ENCODE measurements at regions of chr16 and their contacts with region 1.

Region 1: GRCh38 chr16:25051406-25052150 is 36.4 kb upstream of the ARHGAP17 start:
- DNase-seq: peak in 1 of 9 experiments; percentile 15
- ATAC-seq: no peak
- H3K4me3 ChIP-seq: no peak overlapping the region
- H3K4me3 Mint-ChIP-seq: peak overlapping the region; percentile 36
- H3K27ac ChIP-seq: peak overlapping the region in 1 of 2 experiments; percentile 88
- H3K27ac Mint-ChIP-seq: peak overlapping the region; percentile 79
- H3K4me1 ChIP-seq: peaks cover 44% of the 10 kb centered on the region
- H3K4me1 Mint-ChIP-seq: peaks cover 50% of the 10 kb centered on the region
- H3K27me3 ChIP-seq: no peaks in the 10 kb centered on the region
- H3K27me3 Mint-ChIP-seq: no peaks in the 10 kb centered on the region
- CTCF ChIP-seq: no peak

Region 2: DNA sequence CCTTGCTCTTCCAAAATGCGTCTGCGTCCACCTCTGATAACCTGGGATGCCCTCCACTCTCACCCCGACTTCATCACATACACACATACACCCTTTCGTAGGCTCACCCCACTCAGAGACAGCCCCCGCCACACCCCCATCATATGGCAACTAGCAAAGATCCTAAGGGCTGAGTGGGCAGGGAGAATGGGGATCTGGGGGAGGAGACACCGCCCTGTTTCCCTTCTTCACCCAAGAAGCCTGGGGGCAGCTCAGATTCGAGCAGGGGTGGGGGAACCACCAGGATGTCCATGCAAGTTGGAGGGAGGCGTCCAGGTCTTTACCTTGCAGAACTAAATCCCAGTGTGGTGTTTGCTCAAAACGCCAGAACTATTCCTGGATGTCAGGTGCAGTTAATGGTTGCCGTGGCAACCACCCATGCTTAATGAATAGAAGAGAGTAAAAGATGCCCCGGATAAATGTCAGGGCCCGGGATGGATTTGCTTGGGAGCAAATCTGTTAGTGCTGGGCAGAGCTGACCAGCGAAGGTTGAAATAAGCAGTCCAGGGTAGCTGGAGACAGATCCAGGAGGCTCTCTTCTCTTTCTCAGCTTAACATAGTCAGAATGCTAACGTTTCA is 722.6 kb before region 1 on chr16:
- CTCF ChIA-PET with region 1: no interaction called
- POLR2A ChIA-PET with region 1: no interaction called
- intact Hi-C with region 1: no loop called
- DNase-seq: no peak
- ATAC-seq: no peak
- H3K4me3 ChIP-seq: no peak overlapping the region
- H3K4me3 Mint-ChIP-seq: no peak overlapping the region
- H3K27ac ChIP-seq: no peak overlapping the region
- H3K27ac Mint-ChIP-seq: no peak overlapping the region
- H3K4me1 ChIP-seq: no peaks in the 10 kb centered on the region
- H3K4me1 Mint-ChIP-seq: no peaks in the 10 kb centered on the region
- H3K27me3 ChIP-seq: no peaks in the 10 kb centered on the region
- H3K27me3 Mint-ChIP-seq: peaks cover 19% of the 10 kb centered on the region
- CTCF ChIP-seq: no peak

Region 3: GRCh38 chr16:24883714-24884151 is 167.8 kb before region 1 on chr16:
- CTCF ChIA-PET with region 1: no interaction called
- POLR2A ChIA-PET with region 1: no interaction called
- intact Hi-C with region 1: no loop called
- DNase-seq: no peak
- ATAC-seq: no peak
- H3K4me3 ChIP-seq: no peak overlapping the region
- H3K4me3 Mint-ChIP-seq: no peak overlapping the region
- H3K27ac ChIP-seq: no peak overlapping the region
- H3K27ac Mint-ChIP-seq: no peak overlapping the region
- H3K4me1 ChIP-seq: no peaks in the 10 kb centered on the region
- H3K4me1 Mint-ChIP-seq: no peaks in the 10 kb centered on the region
- H3K27me3 ChIP-seq: no peaks in the 10 kb centered on the region
- H3K27me3 Mint-ChIP-seq: peaks cover 5% of the 10 kb centered on the region
- CTCF ChIP-seq: no peak

Region 4: DNA sequence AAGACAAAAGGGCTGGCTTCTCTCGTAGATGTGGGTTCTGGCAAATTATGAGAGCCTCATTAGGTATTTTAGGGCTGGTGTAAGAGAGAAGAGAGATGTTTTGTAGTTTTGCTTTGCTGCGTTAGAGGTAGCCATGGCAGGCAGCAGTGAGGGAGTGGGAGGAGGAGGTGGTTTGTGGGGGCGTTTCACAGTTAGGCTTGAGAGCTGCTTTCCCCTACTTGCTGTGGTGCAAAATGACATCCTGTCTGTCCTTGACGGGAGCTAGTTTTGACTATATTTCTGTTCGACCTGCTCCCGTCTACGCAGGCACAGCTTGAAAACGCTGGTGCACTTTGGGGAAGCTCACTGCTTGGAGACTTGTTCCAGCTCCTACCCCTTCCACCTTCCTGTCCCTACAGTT is 130.3 kb before region 1 on chr16:
- CTCF ChIA-PET with region 1: no interaction called
- POLR2A ChIA-PET with region 1: no interaction called
- intact Hi-C with region 1: no loop called
- DNase-seq: peak in 6 of 9 experiments; percentile 1 to 56 (median 24)
- ATAC-seq: peak; percentile 83
- H3K4me3 ChIP-seq: no peak overlapping the region
- H3K4me3 Mint-ChIP-seq: no peak overlapping the region
- H3K27ac ChIP-seq: peak overlapping the region in 1 of 2 experiments; percentile 60
- H3K27ac Mint-ChIP-seq: peak overlapping the region; percentile 83
- H3K4me1 ChIP-seq: no peaks in the 10 kb centered on the region
- H3K4me1 Mint-ChIP-seq: peaks cover 21% of the 10 kb centered on the region
- H3K27me3 ChIP-seq: no peaks in the 10 kb centered on the region
- H3K27me3 Mint-ChIP-seq: no peaks in the 10 kb centered on the region
- CTCF ChIP-seq: no peak

Region 5: GRCh38 chr16:25031441-25032307 is 19.9 kb before region 1 on chr16:
- CTCF ChIA-PET with region 1: interaction called, 5 read pairs
- POLR2A ChIA-PET with region 1: interaction called, 38 read pairs
- intact Hi-C with region 1: loop called (anchors 1 kb)
- DNase-seq: peak; percentile 79 to 97 (median 90)
- ATAC-seq: peak; percentile 99
- H3K4me3 ChIP-seq: peak overlapping the region; percentile 88 to 94
- H3K4me3 Mint-ChIP-seq: peak overlapping the region; percentile 96
- H3K27ac ChIP-seq: peak overlapping the region; percentile 65 to 68
- H3K27ac Mint-ChIP-seq: peak overlapping the region; percentile 94
- H3K4me1 ChIP-seq: peaks cover 14% of the 10 kb centered on the region
- H3K4me1 Mint-ChIP-seq: peaks cover 39% of the 10 kb centered on the region
- H3K27me3 ChIP-seq: no peaks in the 10 kb centered on the region
- H3K27me3 Mint-ChIP-seq: no peaks in the 10 kb centered on the region
- CTCF ChIP-seq: no peak

Region 6: DNA sequence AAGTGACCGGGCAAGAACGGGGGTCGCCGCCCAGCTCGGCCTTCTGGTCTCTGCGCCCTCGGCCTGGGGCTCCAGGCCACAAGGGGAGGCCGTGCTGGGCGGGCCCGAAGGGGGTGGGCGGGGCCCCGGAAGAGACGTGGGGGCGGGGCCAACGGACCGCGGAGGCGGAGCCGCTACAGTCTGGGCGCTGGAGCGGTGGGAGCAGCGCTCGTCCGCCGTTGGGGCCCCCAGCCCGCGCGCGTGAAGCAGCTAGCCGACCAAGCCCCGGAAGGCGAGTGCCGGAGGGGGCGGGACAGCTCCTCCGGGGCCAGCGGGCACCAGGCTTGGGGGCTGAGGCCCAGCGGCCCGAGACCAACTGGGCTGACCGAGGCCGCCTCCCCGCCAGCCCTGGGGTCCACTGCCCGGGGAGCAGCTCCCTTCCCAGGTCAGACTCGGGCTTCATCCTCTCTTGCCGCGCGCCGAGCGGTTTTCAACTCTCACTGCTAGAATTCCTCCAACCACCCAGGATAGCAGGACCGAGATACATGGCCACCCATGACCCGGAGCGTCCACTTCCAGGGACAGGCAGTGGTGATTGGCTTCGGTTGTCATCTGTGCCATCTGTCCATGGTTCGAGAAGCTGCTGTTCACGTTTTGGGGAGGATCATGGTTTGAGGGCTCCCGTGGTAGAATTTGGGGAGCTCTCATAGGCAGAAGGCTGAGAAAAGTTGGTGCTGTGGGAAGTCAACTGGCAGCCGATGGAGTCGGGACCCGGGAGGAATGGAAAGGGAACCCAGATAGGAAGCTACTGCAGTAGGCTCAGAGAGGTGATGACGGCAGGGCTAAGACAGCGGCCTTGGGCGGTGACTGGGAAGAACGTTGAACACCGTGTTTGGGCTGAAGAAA is 15.4 kb after region 1 on chr16:
- CTCF ChIA-PET with region 1: interaction called, 4 read pairs
- POLR2A ChIA-PET with region 1: interaction called, 25 read pairs
- intact Hi-C with region 1: loop called (anchors 2 kb)
- DNase-seq: peak; percentile 63 to 92 (median 82)
- ATAC-seq: peak; percentile 97
- H3K4me3 ChIP-seq: peak overlapping the region; percentile 65 to 70
- H3K4me3 Mint-ChIP-seq: peak overlapping the region; percentile 95
- H3K27ac ChIP-seq: peak overlapping the region; percentile 61 to 86
- H3K27ac Mint-ChIP-seq: peak overlapping the region; percentile 97
- H3K4me1 ChIP-seq: peaks cover 42% of the 10 kb centered on the region
- H3K4me1 Mint-ChIP-seq: peaks cover 59% of the 10 kb centered on the region
- H3K27me3 ChIP-seq: no peaks in the 10 kb centered on the region
- H3K27me3 Mint-ChIP-seq: no peaks in the 10 kb centered on the region
- CTCF ChIP-seq: no peak

Region 7: DNA sequence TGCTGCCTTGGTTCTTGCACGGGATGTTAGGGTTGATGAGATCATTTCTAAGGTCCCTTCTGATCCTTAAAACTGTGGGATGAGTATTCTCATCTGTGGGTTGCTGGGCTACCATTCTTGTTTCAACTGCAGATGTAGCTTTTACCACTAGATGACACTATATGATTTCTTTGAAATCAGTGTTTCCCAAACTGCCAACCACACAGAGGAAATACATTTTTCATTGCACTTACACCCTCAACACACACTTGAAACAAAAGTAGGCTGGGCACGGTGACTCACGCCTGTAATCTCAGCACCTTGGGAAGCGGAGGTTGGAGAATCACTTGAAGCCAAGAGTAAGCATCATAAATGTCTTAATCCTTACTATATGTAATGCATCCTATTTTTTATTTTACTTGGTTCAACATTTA is 75.2 kb after region 1 on chr16:
- CTCF ChIA-PET with region 1: interaction called, 3 read pairs
- POLR2A ChIA-PET with region 1: no interaction called
- intact Hi-C with region 1: loop called (anchors 1 kb)
- DNase-seq: peak in 3 of 9 experiments; percentile 12 to 63 (median 40)
- ATAC-seq: peak; percentile 38
- H3K4me3 ChIP-seq: no peak overlapping the region
- H3K4me3 Mint-ChIP-seq: no peak overlapping the region
- H3K27ac ChIP-seq: no peak overlapping the region
- H3K27ac Mint-ChIP-seq: peak overlapping the region; percentile 3
- H3K4me1 ChIP-seq: peaks cover 9% of the 10 kb centered on the region
- H3K4me1 Mint-ChIP-seq: peaks cover 30% of the 10 kb centered on the region
- H3K27me3 ChIP-seq: no peaks in the 10 kb centered on the region
- H3K27me3 Mint-ChIP-seq: no peaks in the 10 kb centered on the region
- CTCF ChIP-seq: peak; percentile 41

Region 8: DNA sequence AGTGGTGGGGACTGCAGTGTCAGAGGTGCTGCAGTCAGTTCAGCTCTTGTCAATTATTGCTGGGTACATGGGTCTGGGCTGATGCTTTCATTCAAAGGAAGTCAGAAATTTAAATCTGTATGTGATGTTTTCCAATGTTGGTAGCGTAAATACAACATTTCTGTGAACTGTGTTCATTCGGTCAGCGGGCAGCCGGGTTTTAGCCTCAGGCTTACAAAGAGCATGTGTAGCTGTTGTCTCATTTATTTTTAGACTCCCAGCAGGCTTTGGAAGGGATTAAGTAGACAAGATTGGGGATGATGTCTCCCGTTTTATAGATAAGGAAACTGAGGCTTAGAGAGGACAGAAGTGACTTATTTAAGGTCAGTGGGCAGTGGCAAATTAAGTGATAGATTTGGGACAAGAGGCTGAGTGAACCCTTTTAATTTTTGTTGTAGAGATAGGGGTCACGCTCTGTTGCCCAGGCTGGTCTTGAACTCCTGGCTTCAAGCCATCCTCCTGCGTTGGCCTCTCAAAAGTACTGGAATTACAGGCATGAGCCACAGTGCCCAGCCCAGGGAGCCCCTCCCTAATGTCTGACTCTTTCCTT is 173.2 kb after region 1 on chr16:
- CTCF ChIA-PET with region 1: interaction called, 28 read pairs
- POLR2A ChIA-PET with region 1: no interaction called
- intact Hi-C with region 1: loop called in 1 of 2 experiments (anchors 1 kb)
- DNase-seq: no peak
- ATAC-seq: no peak
- H3K4me3 ChIP-seq: no peak overlapping the region
- H3K4me3 Mint-ChIP-seq: no peak overlapping the region
- H3K27ac ChIP-seq: no peak overlapping the region
- H3K27ac Mint-ChIP-seq: no peak overlapping the region
- H3K4me1 ChIP-seq: no peaks in the 10 kb centered on the region
- H3K4me1 Mint-ChIP-seq: no peaks in the 10 kb centered on the region
- H3K27me3 ChIP-seq: no peaks in the 10 kb centered on the region
- H3K27me3 Mint-ChIP-seq: no peaks in the 10 kb centered on the region
- CTCF ChIP-seq: no peak

Measured in CD8-positive, alpha-beta T cell (primary cell).